ENCODE measurements at regions of chr13 and their contacts with region 1.

Region 1: DNA sequence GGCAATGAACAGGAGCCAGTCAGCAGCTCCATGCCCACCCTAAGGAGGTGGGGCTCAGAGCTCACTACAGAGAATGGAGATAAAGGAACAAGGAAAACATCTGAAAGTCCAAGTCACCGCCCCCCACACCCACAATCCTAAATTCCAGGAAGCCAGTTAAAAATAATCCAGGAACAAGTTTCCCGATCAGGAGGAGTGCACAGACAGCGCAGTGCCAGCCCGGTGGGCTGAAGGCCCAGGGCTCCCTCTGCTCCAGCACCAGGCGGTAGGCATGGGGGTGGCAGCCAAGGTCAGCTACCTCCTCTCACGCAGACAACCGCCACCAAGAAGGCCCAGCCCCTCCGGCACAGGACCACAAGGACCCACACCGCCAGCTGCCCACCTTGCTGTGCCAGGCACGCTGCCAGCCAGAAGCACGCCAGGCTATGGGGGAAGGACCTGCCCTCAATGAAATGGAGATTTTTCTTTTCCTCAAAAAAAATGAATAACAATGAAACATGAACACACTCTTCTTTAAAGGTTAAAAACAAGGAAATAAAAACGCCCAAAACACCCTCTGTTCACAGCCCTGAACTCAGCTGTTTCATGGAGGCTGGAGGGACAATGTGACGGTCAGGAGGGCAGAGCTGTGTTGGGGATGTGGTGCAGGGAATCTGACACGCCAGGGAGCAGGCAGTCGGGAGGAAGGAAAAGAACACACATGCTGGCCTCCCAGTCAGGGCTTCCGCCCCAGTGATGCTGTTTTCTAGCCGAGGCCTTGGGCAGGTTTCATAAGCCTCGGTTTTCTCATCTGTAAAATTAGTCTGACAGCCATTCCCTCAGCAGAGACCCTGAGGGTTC is 11.0 kb downstream of the STK24 start:
- DNase-seq: peak; percentile 88
- H3K4me3 ChIP-seq: peak overlapping the region; percentile 16
- H3K27ac ChIP-seq: peak overlapping the region; percentile 92
- H3K4me1 ChIP-seq: peaks cover 26% of the 10 kb centered on the region
- H3K27me3 ChIP-seq: no peaks in the 10 kb centered on the region
- CTCF ChIP-seq: no peak

Region 2: GRCh38 chr13:98484289-98485219 is 81.4 kb before region 1 on chr13:
- intact Hi-C with region 1: loop called (anchors 5 kb)
- DNase-seq: peak; percentile 91
- H3K4me3 ChIP-seq: no peak overlapping the region
- H3K27ac ChIP-seq: peak overlapping the region; percentile 76
- H3K4me1 ChIP-seq: peaks cover 31% of the 10 kb centered on the region
- H3K27me3 ChIP-seq: no peaks in the 10 kb centered on the region
- CTCF ChIP-seq: no peak

Measured in colonic mucosa (tissue), 4 donors.